Astrocyte of the cerebellum (primary cell): ENCODE measurements at regions of chr18 and their contacts with region 1.

Region 1: GRCh38 chr18:37341016-37341415 is 224.6 kb downstream of the CELF4 start:
- DNase-seq: no peak
- H3K4me3 ChIP-seq: no peak overlapping the region
- CTCF ChIP-seq: no peak

Region 2: DNA sequence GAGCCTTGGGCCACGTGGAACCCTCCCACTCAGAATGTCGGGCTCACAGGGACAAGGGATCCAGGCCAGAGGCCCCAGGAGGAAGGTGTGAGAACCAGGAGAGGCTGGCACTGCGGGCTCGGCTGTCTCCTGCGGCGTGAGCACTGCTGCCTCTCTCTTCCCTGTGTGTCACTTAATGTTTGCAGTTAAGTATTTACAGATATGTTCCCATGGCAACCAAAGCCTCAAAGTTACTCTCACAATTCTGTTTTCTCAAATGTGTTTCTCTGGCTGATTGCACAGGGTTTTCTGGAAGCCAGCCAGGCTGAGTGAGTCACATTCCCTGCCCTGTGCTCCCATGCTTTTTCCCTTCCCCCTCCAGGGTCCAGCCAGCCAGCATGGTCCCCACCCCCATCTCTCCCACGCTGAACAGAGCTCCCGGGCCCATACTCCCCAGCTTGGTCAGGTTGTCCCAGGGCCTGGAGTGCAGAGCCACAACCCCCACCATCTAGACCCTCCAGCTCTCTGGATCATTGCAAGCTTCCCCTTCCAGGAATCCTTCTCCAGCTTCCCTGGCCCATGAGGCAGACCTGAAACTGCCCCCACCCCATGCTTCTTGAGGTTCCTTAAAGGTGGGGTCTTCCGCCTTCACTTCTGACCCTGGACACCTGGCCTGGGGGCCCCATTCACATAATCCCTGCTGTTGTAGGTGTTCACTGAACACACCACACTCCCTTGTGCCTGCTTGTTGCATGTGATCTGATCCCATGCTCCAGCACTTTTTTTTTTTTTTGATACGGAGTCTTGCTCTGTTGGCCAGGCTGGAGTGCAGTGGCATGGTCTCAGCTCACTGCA is 41.3 kb before region 1 on chr18:
- in situ Hi-C with region 1: loop called (anchors 5 kb)
- DNase-seq: peak; percentile 94
- H3K4me3 ChIP-seq: no peak overlapping the region
- CTCF ChIP-seq: no peak